ENCODE measurements at regions of chr12 and their contacts with region 1.

Region 1: DNA sequence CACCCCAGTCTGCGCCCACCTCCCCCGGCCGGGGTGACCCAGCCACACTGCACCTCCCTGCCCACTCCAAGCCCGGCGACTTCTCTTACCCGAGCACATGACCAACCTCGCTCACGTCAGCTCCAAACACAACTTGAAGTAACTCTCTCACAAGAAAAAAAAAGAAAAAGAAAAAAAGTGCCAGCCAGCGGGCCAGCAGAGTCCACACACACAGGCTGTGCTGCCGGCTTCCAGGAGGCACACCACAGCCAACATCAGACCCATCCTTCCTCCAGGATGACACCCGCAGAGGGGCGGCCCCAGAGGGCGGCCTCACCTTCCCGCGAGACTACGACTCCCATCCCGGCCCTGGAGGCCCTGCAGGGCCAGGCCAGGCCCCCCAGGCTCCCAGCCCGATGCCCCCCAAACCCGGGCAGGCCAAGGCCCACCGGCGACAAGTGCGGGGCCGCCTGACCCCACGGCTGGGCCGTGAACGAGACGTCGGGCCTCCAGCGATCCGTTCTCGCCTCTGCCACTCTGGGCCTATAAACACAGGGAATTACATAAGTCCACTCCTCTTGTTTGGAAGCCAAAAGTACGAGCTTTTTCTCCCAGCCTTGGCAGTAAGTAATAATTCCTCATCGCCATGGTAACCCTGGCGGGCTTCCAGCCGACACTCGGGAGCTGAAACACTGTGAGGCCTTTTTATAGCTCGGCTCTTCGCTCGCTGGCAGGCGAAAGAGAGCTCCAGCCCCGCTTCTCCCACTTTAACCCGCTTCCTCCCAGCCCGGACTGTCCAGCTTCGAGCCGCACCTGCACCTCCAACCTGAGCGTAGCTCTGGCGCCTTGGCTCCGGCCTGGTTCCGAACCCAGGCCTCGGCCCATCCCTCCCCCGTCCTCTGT is 49.1 kb downstream of the NCOR2 start:
- DNase-seq: peak; percentile 99
- H3K4me3 ChIP-seq: peak overlapping the region; percentile 67
- CTCF ChIP-seq: no peak

Region 2: GRCh38 chr12:124506145-124506831 is 12.0 kb before region 1 on chr12:
- CTCF ChIA-PET with region 1: interaction called, 7 read pairs
- POLR2A ChIA-PET with region 1: interaction called, 11 read pairs
- DNase-seq: no peak
- H3K4me3 ChIP-seq: peak overlapping the region; percentile 32
- CTCF ChIP-seq: no peak